MCF 10A (cell line): ENCODE measurements at regions of chrX and their contacts with region 1.

Region 1: GRCh38 chrX:1159548-1159947 is 52.9 kb downstream of the CRLF2 start:
- DNase-seq: no peak
- H3K4me3 Mint-ChIP-seq: no peak overlapping the region
- H3K27ac Mint-ChIP-seq: no peak overlapping the region
- H3K4me1 Mint-ChIP-seq: no peaks in the 10 kb centered on the region
- H3K27me3 Mint-ChIP-seq: no peaks in the 10 kb centered on the region
- CTCF ChIP-seq: no peak

Region 2: DNA sequence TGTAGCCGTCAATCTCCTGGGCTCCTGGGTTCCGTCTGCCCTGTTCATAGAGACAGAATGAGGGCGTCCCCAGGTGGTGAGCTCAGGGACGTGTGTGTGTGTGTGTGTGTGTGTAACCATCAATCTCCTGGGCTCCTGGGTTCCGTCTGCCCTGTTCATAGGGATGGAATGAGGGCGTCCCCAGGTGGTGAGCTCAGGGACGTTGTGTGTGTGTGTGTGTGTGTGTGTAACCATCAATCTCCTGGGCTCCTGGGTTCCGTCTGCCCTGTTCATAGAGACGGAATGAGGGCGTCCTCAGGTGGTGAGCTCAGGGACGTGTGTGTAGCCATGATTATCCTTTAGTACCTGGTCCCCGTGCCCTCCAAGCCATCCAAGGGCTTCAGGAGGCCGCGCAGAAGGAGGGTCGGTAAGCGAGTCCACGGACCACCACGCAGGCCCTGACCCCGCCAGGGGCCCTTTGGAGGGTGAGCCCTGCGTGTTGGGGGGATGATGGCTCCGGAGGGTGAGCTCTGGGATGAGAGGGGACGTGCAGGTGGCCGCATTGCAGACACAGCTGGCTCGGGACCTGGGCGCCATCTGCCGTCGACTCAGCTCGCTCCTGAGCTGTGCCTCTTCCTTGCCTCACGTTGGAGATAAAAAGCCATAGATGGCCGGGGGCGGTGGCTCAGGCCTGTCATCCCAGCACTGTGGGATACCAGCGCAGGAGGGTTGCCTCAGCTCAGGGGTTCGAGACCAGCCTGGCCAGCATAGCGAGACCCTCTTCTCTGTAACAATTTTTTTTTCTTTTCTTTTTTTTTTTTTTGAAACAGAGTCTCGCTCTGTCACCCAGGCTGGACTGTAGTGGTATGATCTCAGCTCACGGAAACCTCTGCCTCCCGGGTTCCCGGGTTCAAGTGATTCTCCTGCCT is 835.6 kb before region 1 on chrX:
- CTCF ChIA-PET with region 1: no interaction called
- POLR2A ChIA-PET with region 1: no interaction called
- intact Hi-C with region 1: loop called (anchors 5 kb)
- DNase-seq: peak; percentile 64
- H3K4me3 Mint-ChIP-seq: peak overlapping the region; percentile 35
- H3K27ac Mint-ChIP-seq: peak overlapping the region; percentile 4
- H3K4me1 Mint-ChIP-seq: peaks cover 7% of the 10 kb centered on the region
- H3K27me3 Mint-ChIP-seq: no peaks in the 10 kb centered on the region
- CTCF ChIP-seq: no peak